ENCODE measurements at regions of chr6 and their contacts with region 1.

Region 1: GRCh38 chr6:147506704-147507114 is 1.8 kb upstream of the SAMD5 start:
- DNase-seq: peak; percentile 52 to 87
- H3K4me3 ChIP-seq: peak overlapping the region; percentile 43
- H3K4me1 ChIP-seq: no peaks in the 10 kb centered on the region; the same call in 1 of the 2 replicates
- H3K27me3 ChIP-seq: peaks cover 36% of the 10 kb centered on the region

Region 2: GRCh38 chr6:147806702-147807101 is 300.0 kb after region 1 on chr6:
- in situ Hi-C with region 1: loop called (anchors 25 kb)
- DNase-seq: peak; percentile 48 to 62
- H3K4me3 ChIP-seq: no peak overlapping the region
- H3K4me1 ChIP-seq: peaks cover 3% of the 10 kb centered on the region; the same call in 1 of the 2 replicates
- H3K27me3 ChIP-seq: peaks cover 9% of the 10 kb centered on the region; the same call in 1 of the 2 replicates

Region 3: DNA sequence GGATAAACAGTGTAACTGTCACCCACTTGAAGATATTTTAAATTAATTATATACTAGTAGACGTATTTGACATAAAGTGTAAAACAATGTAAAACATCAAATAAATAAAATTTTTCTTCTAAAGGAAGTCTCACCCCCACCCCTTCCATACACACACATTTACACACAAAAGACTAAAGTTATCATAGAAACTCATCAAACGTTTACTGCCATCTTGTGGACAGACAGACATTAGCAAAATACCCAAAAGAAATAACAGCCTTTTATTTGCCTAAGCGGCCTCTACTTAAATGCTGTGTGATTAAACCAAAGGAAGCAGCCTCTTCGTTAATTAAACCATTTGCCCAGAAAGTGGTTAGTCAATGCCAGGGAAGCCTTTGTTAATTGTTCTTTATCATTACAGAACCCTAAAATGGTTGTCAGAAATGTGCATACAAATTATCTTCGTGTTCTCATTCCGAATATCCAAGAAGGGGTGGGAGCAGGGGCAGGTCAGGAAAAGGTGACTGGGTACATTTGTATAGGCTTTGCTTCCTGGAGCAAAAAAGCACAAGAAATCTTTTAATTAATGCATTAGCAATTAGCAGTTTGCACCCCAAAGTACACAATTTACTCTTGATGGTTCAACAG is 659.7 kb after region 1 on chr6:
- in situ Hi-C with region 1: loop called (anchors 10 kb)
- DNase-seq: peak in 1 of 2 experiments; percentile 60
- H3K4me3 ChIP-seq: no peak overlapping the region
- H3K4me1 ChIP-seq: no peaks in the 10 kb centered on the region
- H3K27me3 ChIP-seq: no peaks in the 10 kb centered on the region